AG04450 (cell line): ENCODE measurements at regions of chr18 and their contacts with region 1.

Region 1: GRCh38 chr18:12990967-12991838 is at the start of gene CEP192:
- DNase-seq: peak; percentile 96
- H3K4me3 ChIP-seq: peak within 1 kb of the TSS; percentile 96
- H3K27ac ChIP-seq: peak within 1 kb of the TSS; percentile 83
- H3K27me3 ChIP-seq: no peaks in the 10 kb centered on the region
- CTCF ChIP-seq: no peak
- polyA plus RNA-seq, gene CEP192: 16.9 and 21.1 TPM in 2 replicates

Region 2: GRCh38 chr18:12947355-12948041 is 43.7 kb before region 1 on chr18 and contains the start of gene SEH1L:
- CTCF ChIA-PET with region 1: no interaction called
- POLR2A ChIA-PET with region 1: interaction called, 16 read pairs
- DNase-seq: peak; percentile 98
- H3K4me3 ChIP-seq: peak within 1 kb of the TSS; percentile 94
- H3K27ac ChIP-seq: peak within 1 kb of the TSS; percentile 99
- H3K27me3 ChIP-seq: no peaks in the 10 kb centered on the region
- CTCF ChIP-seq: no peak
- polyA plus RNA-seq, gene SEH1L: 47.9 and 54.6 TPM in 2 replicates

Region 3: DNA sequence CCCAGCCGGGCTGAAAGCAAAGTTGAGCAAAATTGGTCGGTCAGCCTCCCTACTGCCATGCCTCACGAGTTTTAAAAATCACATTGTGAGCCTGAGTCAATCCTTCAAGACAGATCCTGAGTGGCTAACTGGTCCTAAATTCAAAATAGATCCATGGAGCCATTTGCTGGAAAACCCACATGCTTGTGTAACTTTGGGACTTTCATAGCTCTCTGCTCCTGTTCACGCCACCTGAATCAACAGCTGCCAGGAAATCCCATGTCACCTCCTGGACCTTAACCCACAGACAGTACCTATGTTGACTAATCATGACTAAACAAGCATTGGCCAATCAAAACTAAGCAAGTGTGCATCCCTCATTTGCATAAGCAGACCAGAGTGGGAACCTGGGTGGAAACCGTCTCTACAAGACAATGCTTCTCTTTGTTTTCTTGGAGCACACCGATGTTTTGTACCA is 184.6 kb after region 1 on chr18:
- CTCF ChIA-PET with region 1: no interaction called
- POLR2A ChIA-PET with region 1: no interaction called
- DNase-seq: no peak
- H3K4me3 ChIP-seq: no peak overlapping the region
- H3K27ac ChIP-seq: no peak overlapping the region
- H3K27me3 ChIP-seq: no peaks in the 10 kb centered on the region
- CTCF ChIP-seq: no peak